Mucosa of descending colon (tissue), 3 donors: ENCODE measurements at regions of chr4 and their contacts with region 1.

Region 1: DNA sequence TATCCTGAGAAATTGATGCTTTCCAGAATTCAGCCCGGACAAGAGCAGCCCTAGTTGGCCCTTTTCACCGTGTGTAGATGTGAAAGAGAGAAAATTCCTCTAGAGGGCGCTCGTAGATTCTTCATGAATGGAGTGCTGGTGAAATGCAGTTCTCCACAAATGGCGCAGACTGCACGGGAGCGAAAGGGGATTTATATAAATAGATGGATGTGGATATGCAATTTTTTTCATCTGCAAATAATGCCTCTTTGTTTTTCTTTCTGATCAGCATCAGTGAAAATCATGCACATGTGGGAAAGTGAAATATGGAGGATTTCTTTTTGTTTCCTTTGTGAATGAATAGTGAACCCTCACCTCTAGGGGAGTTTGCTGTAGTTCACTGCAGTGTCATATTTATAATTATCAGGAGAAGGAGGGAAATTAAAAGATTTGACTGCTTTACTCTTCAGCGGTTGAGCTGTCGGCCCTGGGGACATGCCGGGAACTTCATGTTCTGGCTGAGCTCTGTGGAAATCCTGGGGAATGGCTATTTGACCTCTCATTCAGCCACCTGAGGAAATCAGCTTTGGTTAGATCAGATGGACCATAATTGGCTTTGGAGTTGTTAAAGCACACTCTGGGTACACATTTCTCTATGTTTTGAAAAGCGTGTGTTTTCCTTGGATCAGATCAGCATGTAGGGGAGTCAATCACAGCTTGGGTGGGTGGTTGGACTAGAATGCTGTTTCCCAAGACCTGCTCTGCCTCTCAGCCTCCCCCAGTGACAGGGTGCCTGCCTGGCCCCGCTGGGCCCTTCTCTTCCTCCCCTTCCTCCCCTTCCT is 115.0 kb upstream of the SHISA3 start:
- DNase-seq: peak in 1 of 3 donors; percentile 74
- ATAC-seq: peak; percentile 88
- H3K4me3 ChIP-seq: no peak overlapping the region
- H3K4me1 ChIP-seq: no peaks in the 10 kb centered on the region
- CTCF ChIP-seq: peak; percentile 36

Region 2: GRCh38 chr4:42519803-42520417 is 237.6 kb after region 1 on chr4:
- intact Hi-C with region 1: loop called (anchors 5 to 10 kb)
- DNase-seq: peak in 1 of 3 donors; percentile 83
- ATAC-seq: peak; percentile 57
- H3K4me3 ChIP-seq: no peak overlapping the region
- H3K4me1 ChIP-seq: no peaks in the 10 kb centered on the region
- CTCF ChIP-seq: peak; percentile 33

Region 3: DNA sequence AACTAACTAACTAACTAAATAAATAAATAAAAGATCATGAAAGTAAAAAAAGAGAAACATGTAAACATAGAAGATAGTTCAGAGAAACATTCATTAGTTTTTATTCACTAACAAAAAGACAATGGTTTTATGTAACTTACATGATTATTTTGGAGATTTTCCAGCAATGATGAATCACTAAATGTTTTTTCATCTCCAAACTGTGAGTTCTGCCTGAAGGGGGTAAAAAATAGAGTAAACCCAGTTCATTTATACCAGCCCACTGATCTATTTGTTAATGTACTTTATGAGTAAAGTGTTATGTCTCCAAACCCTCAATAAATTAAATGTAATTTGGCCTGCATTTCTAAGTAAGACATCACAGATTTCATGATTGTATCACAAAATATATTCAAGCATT is 273.5 kb after region 1 on chr4:
- intact Hi-C with region 1: no loop called
- DNase-seq: no peak
- ATAC-seq: no peak
- H3K4me3 ChIP-seq: no peak overlapping the region
- H3K4me1 ChIP-seq: no peaks in the 10 kb centered on the region
- CTCF ChIP-seq: no peak

Region 4: DNA sequence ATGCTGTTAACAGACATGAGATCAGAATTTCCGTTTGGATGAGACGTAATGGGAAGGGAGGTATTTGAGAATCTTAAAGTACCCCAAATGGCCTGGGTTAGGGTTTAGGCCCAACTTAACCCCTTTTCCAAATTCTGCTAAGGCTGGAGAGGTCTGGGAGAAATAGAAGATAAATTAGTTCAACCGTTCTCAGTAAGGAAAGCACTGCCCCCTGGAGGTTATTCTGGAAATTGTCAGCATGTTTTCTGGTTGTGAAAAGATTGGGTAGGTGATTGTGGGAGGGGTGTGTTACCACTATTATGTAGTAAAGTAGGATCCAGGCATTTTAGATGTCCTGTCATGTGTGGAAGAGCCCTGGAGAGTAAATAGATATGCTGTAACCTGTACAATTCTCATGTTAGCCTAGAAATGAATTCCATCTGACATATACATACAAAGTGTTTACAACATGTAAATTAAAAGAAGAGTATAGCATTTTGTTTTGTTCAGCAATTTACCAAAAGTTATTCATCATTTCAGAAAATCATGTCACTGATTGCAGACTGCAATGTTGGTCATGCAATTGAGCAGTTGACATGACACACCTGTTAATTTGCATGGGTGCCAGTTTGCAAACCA is 583.4 kb after region 1 on chr4:
- intact Hi-C with region 1: loop called in 1 of 2 experiments (anchors 5 kb)
- DNase-seq: peak in 1 of 3 donors; percentile 81
- ATAC-seq: peak; percentile 57
- H3K4me3 ChIP-seq: no peak overlapping the region
- H3K4me1 ChIP-seq: no peaks in the 10 kb centered on the region
- CTCF ChIP-seq: peak; percentile 32